ENCODE measurements at regions of chr7 and their contacts with region 1.

Region 1: GRCh38 chr7:25389489-25390106 is 161.3 kb upstream of the NPVF start:
- DNase-seq: no peak
- H3K4me3 ChIP-seq: no peak overlapping the region
- H3K27ac ChIP-seq: no peak overlapping the region
- H3K4me1 ChIP-seq: peaks cover 8% of the 10 kb centered on the region
- H3K27me3 ChIP-seq: no peaks in the 10 kb centered on the region
- CTCF ChIP-seq: peak; percentile 43 to 61 (median 44)
- EP300 ChIP-seq: no peak
- POLR2A ChIP-seq: no peak

Region 2: DNA sequence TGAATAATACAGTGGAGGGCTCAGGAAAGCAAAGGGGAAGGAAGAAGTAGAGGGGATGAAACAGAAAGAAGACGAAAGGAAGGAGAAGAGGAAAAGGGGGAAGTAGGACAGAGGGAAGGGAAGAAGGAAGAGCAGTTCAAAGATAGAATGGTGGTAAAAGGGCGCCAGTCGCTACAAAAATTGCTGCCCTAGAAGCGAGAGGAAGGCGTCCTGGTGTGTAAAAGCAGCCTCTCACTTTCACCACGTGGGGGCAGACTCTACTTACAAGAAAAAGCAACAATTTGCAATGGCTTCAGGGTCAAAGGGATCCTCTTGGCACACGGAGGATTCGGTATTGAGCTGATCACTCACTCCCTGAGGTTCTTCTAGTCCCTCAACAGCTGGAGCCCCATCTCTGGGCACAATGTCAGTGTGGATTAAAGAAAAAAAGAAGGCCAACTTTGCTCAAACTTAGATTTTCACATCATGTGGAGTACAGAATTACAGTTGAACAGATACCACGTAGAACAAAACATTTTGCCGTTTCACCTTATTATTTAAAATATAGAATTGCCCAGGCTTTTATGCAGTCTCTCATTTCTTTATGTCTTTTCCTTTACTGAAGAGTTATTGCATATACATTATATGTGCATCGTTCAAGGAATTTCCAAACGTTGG is 129.9 kb before region 1 on chr7:
- intact Hi-C with region 1: loop called (anchors 2 to 5 kb)
- DNase-seq: peak; percentile 51 to 77 (median 53)
- H3K4me3 ChIP-seq: no peak overlapping the region
- H3K27ac ChIP-seq: no peak overlapping the region
- H3K4me1 ChIP-seq: no peaks in the 10 kb centered on the region
- H3K27me3 ChIP-seq: no peaks in the 10 kb centered on the region
- CTCF ChIP-seq: peak; percentile 70 to 80 (median 71)
- EP300 ChIP-seq: no peak
- POLR2A ChIP-seq: no peak

Region 3: DNA sequence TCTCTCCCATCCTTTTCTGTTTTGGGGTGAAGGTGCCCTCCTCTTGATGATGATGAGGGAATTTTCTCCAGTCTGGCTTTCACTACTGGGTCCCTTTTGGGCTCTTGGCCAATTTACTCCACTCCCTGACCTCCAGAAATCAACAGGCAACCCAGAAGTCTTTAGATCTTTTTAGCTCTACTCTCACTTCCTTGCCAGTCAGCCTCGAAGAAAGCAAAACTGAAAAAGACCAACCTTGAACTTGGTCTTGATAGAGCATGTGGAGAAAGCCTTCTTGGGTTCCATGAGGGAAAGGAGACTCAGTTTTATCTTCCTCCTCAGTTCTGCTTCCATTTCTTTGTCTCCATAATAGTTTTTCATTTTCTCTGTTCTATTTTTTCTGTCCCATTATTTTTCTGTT is 69.9 kb before region 1 on chr7:
- intact Hi-C with region 1: loop called in 1 of 4 experiments (anchors 10 kb)
- DNase-seq: no peak
- H3K4me3 ChIP-seq: no peak overlapping the region
- H3K27ac ChIP-seq: peak overlapping the region in 1 of 2 donors; percentile 44
- H3K4me1 ChIP-seq: peaks cover 17% of the 10 kb centered on the region
- H3K27me3 ChIP-seq: no peaks in the 10 kb centered on the region
- CTCF ChIP-seq: no peak
- EP300 ChIP-seq: no peak
- POLR2A ChIP-seq: no peak

Region 4: DNA sequence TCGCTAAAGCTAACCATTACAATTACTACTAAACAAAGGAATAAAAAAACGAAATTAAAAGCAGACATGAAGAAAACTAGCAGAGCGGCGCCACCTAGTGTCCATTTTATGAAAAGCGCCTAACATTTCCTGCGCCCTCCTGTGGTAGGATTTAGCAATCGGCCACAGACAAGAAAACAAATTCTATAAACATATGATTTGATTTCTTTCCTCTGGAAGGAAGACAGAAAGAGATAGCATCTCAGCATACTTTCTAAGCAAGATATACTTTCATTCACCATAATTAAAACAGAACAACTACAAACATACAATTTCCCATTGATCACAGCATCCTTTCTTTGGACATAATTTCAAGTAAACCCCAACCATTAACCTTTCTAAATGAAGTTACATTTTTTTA is 176.4 kb after region 1 on chr7:
- intact Hi-C with region 1: loop called in 3 of 4 experiments (anchors 2 to 5 kb)
- DNase-seq: peak; percentile 51 to 80 (median 76)
- H3K4me3 ChIP-seq: no peak overlapping the region
- H3K27ac ChIP-seq: no peak overlapping the region
- H3K4me1 ChIP-seq: peaks cover 3% of the 10 kb centered on the region
- H3K27me3 ChIP-seq: no peaks in the 10 kb centered on the region
- CTCF ChIP-seq: peak; percentile 98 to 100 (median 98)
- EP300 ChIP-seq: no peak
- POLR2A ChIP-seq: no peak